ENCODE measurements at regions of chr9 and their contacts with region 1.

Region 1: DNA sequence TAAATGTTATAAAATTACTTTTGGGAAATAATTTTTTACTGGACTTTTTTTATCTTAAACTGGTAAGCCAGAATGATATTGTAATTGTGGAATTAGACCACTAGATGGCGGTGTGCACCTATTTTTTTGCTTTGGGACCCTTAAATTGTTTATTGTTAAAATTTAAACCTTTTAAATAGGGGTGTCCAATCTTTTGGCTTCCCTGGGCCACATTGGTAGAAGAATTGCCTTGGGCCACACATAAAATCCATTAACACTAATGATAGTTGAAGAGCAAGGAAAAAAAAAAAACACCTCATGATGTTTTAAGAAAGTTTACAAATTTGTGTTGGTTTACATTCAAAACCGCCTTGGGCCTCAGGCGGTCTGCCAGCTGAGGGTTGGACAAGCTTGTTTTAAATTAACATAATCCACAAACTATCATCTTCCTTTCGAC is 28.4 kb upstream of the GADD45G start:
- DNase-seq: no peak
- H3K4me3 Mint-ChIP-seq: no peak overlapping the region
- H3K27ac Mint-ChIP-seq: no peak overlapping the region
- H3K4me1 Mint-ChIP-seq: peaks cover 25% of the 10 kb centered on the region
- H3K27me3 Mint-ChIP-seq: peaks cover 63% of the 10 kb centered on the region

Region 2: GRCh38 chr9:89597711-89598625 is 21.5 kb after region 1 on chr9:
- intact Hi-C with region 1: loop called (anchors 2 kb)
- DNase-seq: peak; percentile 48
- H3K4me3 Mint-ChIP-seq: no peak overlapping the region
- H3K27ac Mint-ChIP-seq: no peak overlapping the region
- H3K4me1 Mint-ChIP-seq: peaks cover 2% of the 10 kb centered on the region
- H3K27me3 Mint-ChIP-seq: peaks cover 16% of the 10 kb centered on the region

Region 3: GRCh38 chr9:89631384-89631783 is 55.0 kb after region 1 on chr9:
- intact Hi-C with region 1: no loop called
- DNase-seq: no peak
- H3K4me3 Mint-ChIP-seq: no peak overlapping the region
- H3K27ac Mint-ChIP-seq: no peak overlapping the region
- H3K4me1 Mint-ChIP-seq: peaks cover 31% of the 10 kb centered on the region
- H3K27me3 Mint-ChIP-seq: peaks cover 11% of the 10 kb centered on the region

Region 4: GRCh38 chr9:89902450-89903145 is 326.2 kb after region 1 on chr9:
- intact Hi-C with region 1: no loop called
- DNase-seq: no peak
- H3K4me3 Mint-ChIP-seq: no peak overlapping the region
- H3K27ac Mint-ChIP-seq: no peak overlapping the region
- H3K4me1 Mint-ChIP-seq: no peaks in the 10 kb centered on the region
- H3K27me3 Mint-ChIP-seq: peaks cover 30% of the 10 kb centered on the region

Region 5: DNA sequence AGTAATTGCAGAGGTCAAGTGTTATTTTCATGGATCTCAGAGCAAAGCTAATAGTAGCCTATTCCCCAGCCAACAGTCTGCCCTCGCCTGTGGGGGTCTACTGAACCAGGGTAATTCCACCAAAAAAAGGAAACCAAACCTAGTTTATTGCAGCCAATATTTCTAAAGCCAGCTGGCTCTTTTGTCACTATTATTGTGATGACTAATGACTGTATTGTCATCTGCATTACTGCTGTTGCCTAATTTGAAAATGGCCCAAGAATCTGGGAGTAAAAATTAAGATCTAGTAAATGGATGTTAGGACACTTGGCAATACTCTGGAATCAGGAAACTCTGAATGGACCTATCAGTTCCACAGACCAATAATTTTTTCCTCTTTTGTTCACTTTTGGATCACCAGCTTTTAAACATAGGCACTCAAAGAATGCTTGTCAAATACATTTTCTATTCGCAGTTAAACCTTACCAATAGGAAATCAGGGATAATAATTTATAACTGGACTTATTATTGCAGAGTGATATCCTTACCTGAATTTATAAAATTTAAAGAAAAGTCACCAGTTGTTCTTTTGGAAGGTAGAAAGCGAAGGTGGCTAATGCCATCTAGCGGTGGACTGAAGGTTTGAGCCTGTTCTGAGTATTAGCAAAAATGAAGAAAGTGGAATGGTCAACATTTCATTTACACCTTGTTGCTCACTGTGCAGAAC is 1294.4 kb after region 1 on chr9:
- intact Hi-C with region 1: loop called (anchors 5 kb)
- DNase-seq: no peak
- H3K4me3 Mint-ChIP-seq: no peak overlapping the region
- H3K27ac Mint-ChIP-seq: no peak overlapping the region
- H3K4me1 Mint-ChIP-seq: no peaks in the 10 kb centered on the region
- H3K27me3 Mint-ChIP-seq: peaks cover 14% of the 10 kb centered on the region